Heart right ventricle (tissue), 16 donors: ENCODE measurements at regions of chr5 and their contacts with region 1.

Region 1: DNA sequence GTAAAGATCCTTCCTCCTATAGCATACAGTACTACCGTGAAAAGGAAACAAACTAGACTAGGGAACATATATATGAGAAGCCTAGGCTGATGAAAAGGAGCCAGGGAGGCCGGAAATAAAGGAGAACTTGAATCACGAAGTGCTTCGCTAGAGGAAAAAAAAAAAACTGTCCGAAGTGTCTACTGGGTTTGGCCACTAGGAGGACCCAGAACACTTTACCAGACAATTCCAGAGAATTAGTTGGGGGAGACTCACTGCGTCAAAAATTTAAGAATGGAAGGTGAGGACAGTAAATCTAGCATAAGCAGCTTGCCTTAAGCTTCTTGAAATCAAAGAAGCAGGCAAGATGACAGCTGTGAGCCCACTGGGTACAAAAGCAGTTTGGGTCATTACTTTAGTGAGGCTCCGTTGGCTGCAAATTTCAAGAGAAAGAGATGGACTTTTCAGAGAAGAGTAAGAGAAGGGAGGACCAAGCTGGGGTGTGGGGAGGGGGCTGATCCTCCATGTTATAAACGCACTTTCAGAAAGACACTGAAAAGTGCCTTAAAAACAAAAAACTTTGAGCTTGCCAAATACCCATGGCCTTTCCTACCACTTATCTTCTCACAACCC is 47.4 kb downstream of the P4HA2 start:
- DNase-seq: peak in 1 of 2 donors; percentile 18
- ATAC-seq: peak in 6 of 8 donors; percentile 35 to 67 (median 53)
- H3K4me3 ChIP-seq: no peak overlapping the region
- H3K27ac ChIP-seq: no peak overlapping the region
- H3K4me1 ChIP-seq: peaks cover 0 to 18% (median 4%) of the 10 kb centered on the region in 9 donors
- H3K27me3 ChIP-seq: no peaks in the 10 kb centered on the region
- CTCF ChIP-seq: peak; percentile 31 to 80 (median 72)

Region 2: DNA sequence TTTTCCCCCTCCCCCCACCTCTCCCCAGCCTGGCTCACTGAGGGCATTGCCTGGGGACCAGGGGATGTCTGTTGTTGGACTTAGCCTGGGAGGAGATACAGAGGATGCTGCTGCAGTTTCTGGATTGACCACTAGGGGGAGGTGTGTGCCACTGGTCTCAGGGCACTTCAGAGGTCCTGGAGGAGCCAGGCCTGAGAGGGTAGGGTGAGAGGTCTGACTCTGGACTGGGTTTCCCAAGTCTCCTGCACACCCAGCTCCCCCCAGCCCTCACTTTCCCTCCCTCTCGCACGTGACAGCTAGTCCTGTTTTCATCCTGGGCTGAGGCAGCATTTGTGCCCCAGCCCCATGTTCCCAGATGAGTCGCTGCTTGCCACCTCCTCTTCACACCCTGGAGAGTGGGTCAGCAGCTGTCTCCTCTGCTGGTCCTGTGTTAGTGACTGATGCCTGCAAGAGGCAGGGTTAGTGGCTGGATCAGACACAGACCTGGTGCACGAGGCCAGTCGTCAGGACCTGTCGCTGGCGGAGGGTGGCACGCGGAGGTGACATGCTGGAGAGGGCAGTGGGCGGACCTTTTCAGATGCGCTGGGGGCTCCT is 115.4 kb before region 1 on chr5:
- intact Hi-C with region 1: loop called in 2 of 10 experiments (anchors 10 kb)
- DNase-seq: peak; percentile 49 to 71
- ATAC-seq: peak; percentile 45 to 86 (median 70)
- H3K4me3 ChIP-seq: no peak overlapping the region
- H3K27ac ChIP-seq: no peak overlapping the region
- H3K4me1 ChIP-seq: peaks cover 0 to 8% (median 0%) of the 10 kb centered on the region in 9 donors
- H3K27me3 ChIP-seq: no peaks in the 10 kb centered on the region
- CTCF ChIP-seq: peak; percentile 75 to 95 (median 90)

Region 3: GRCh38 chr5:132103332-132103951 is 76.8 kb before region 1 on chr5:
- intact Hi-C with region 1: no loop called
- DNase-seq: peak; percentile 76
- ATAC-seq: peak; percentile 81 to 95 (median 92)
- H3K4me3 ChIP-seq: no peak overlapping the region
- H3K27ac ChIP-seq: peak overlapping the region in 7 of 10 donors; percentile 4 to 79 (median 48)
- H3K4me1 ChIP-seq: peaks cover 13 to 50% (median 16%) of the 10 kb centered on the region in 9 donors
- H3K27me3 ChIP-seq: no peaks in the 10 kb centered on the region
- CTCF ChIP-seq: peak in 1 of 9 donors; percentile 7

Region 4: GRCh38 chr5:132227485-132228240 is 47.4 kb after region 1 on chr5 and contains the start of gene P4HA2:
- intact Hi-C with region 1: loop called in 2 of 10 experiments (anchors 5 to 10 kb)
- DNase-seq: peak; percentile 80 to 87
- ATAC-seq: peak; percentile 79 to 92 (median 88)
- H3K4me3 ChIP-seq: peak within 1 kb of the TSS; percentile 59 to 98 (median 88)
- H3K27ac ChIP-seq: peak within 1 kb of the TSS; percentile 77 to 99 (median 94)
- H3K4me1 ChIP-seq: peaks cover 29 to 62% (median 44%) of the 10 kb centered on the region in 9 donors
- H3K27me3 ChIP-seq: peaks cover 0 to 16% (median 0%) of the 10 kb centered on the region in 7 donors
- CTCF ChIP-seq: peak in 4 of 9 donors; percentile 2 to 40 (median 23)
- total RNA-seq, gene P4HA2: 35.0 to 77.1 (median 52.4) TPM

Region 5: DNA sequence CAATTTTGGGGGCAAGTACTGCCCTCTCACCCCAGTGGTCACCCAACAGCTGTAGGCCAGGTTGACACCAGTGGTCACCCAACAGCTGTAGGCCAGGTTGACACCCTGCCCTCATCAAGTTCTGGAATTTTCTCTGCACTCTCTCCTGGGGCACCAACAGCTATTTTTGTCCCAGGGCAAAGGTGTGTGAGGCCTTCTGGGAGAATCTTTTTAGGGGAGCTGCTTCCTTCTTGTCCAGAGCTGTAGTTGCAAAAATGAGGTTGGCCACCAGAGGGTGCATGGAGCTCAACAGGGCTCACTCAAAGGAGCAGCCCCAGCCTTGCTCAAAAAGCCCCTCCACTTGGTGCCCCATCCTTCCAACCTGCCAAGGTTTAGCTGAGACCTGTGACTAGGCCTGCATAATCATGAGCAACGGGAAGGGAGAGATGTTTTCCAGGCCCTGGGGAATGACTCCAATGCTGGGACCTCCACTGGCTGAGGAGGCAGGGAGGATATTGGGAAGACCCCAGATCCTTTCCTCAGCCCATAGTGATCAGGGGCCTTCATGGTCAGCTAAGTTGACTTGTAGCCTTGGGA is 58.0 kb after region 1 on chr5:
- intact Hi-C with region 1: loop called in 1 of 10 experiments (anchors 10 kb)
- DNase-seq: peak; percentile 54 to 66
- ATAC-seq: peak; percentile 51 to 83 (median 78)
- H3K4me3 ChIP-seq: no peak overlapping the region
- H3K27ac ChIP-seq: no peak overlapping the region
- H3K4me1 ChIP-seq: peaks cover 0 to 2% (median 0%) of the 10 kb centered on the region in 9 donors
- H3K27me3 ChIP-seq: no peaks in the 10 kb centered on the region
- CTCF ChIP-seq: peak; percentile 72 to 88 (median 83)

Region 6: GRCh38 chr5:132272311-132273210 is 92.3 kb after region 1 on chr5:
- intact Hi-C with region 1: loop called in 1 of 10 experiments (anchors 10 kb)
- DNase-seq: peak in 1 of 2 donors; percentile 60
- ATAC-seq: peak in 7 of 8 donors; percentile 23 to 57 (median 51)
- H3K4me3 ChIP-seq: peak overlapping the region in 2 of 10 donors; percentile 11 to 20
- H3K27ac ChIP-seq: no peak overlapping the region
- H3K4me1 ChIP-seq: peaks cover 0 to 15% (median 0%) of the 10 kb centered on the region in 9 donors
- H3K27me3 ChIP-seq: no peaks in the 10 kb centered on the region
- CTCF ChIP-seq: peak; percentile 72 to 91 (median 86)

Region 7: GRCh38 chr5:132369474-132370180 is 189.4 kb after region 1 on chr5 and contains the start of gene SLC22A5:
- intact Hi-C with region 1: loop called in 2 of 10 experiments (anchors 10 kb)
- DNase-seq: peak in 1 of 2 donors; percentile 73
- ATAC-seq: peak; percentile 81 to 87 (median 86)
- H3K4me3 ChIP-seq: peak within 1 kb of the TSS; percentile 51 to 82 (median 72)
- H3K27ac ChIP-seq: peak within 1 kb of the TSS; percentile 70 to 92 (median 90)
- H3K4me1 ChIP-seq: peaks cover 3 to 55% (median 21%) of the 10 kb centered on the region in 9 donors
- H3K27me3 ChIP-seq: no peaks in the 10 kb centered on the region
- CTCF ChIP-seq: no peak
- total RNA-seq, gene SLC22A5: 10.3 to 36.8 (median 12.5) TPM

Region 8: DNA sequence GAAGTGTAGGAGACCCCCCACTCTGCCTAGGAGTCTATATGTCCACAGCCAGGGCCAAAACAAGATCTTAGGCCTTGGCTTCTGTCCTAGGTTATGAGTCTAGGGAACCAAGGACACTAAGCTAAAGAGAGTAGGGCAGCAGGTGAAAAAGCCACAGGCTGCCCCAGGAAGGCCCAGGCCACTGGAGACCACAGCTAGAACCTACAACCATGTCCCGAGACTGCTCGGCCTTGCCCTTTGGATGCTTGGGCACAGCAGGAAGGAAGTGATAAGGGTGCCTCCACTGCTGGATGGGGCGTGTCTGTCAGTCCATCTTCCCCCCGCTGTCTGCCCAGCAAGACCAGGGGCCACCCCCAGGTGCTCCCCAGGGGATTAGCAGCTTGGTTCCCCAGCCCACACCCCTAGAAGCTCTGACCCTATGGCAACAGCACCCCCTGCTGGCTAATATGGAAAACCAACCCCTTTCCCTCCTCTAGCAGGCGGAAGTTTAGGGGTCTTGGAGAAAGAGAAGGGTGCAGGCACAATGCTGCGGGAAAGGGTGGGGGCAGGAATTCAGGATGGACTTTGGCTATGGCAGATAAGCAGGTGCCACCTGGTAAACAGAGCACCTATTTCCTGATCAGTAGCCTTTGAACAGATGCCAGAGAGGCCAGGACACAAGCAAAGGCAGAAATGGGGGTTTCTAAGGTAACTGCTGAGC is 320.8 kb after region 1 on chr5:
- intact Hi-C with region 1: loop called in 2 of 10 experiments (anchors 5 to 10 kb)
- DNase-seq: peak; percentile 55 to 73
- ATAC-seq: peak in 5 of 8 donors; percentile 10 to 46 (median 38)
- H3K4me3 ChIP-seq: no peak overlapping the region
- H3K27ac ChIP-seq: peak overlapping the region in 9 of 10 donors; percentile 0 to 100 (median 46)
- H3K4me1 ChIP-seq: peaks cover 15 to 69% (median 44%) of the 10 kb centered on the region in 9 donors
- H3K27me3 ChIP-seq: no peaks in the 10 kb centered on the region
- CTCF ChIP-seq: peak; percentile 77 to 89 (median 84)